Sigmoid colon (tissue), 7 donors: ENCODE measurements at regions of chr9 and their contacts with region 1.

Region 1: GRCh38 chr9:87324613-87325194 is 173.0 kb upstream of the DAPK1 start:
- DNase-seq: no peak
- H3K4me3 ChIP-seq: no peak overlapping the region
- H3K27ac ChIP-seq: no peak overlapping the region
- H3K4me1 ChIP-seq: peaks cover 0 to 16% (median 4%) of the 10 kb centered on the region in 4 donors
- H3K27me3 ChIP-seq: no peaks in the 10 kb centered on the region
- CTCF ChIP-seq: peak; percentile 71 to 85 (median 77)
- EP300 ChIP-seq: no peak
- POLR2A ChIP-seq: no peak

Region 2: GRCh38 chr9:86413966-86414880 is 910.5 kb before region 1 on chr9:
- intact Hi-C with region 1: loop called (anchors 2 kb)
- DNase-seq: no peak
- H3K4me3 ChIP-seq: no peak overlapping the region
- H3K27ac ChIP-seq: no peak overlapping the region
- H3K4me1 ChIP-seq: peaks cover 0 to 6% (median 0%) of the 10 kb centered on the region in 4 donors
- H3K27me3 ChIP-seq: no peaks in the 10 kb centered on the region
- CTCF ChIP-seq: peak; percentile 41 to 77 (median 45)
- EP300 ChIP-seq: no peak
- POLR2A ChIP-seq: no peak

Region 3: DNA sequence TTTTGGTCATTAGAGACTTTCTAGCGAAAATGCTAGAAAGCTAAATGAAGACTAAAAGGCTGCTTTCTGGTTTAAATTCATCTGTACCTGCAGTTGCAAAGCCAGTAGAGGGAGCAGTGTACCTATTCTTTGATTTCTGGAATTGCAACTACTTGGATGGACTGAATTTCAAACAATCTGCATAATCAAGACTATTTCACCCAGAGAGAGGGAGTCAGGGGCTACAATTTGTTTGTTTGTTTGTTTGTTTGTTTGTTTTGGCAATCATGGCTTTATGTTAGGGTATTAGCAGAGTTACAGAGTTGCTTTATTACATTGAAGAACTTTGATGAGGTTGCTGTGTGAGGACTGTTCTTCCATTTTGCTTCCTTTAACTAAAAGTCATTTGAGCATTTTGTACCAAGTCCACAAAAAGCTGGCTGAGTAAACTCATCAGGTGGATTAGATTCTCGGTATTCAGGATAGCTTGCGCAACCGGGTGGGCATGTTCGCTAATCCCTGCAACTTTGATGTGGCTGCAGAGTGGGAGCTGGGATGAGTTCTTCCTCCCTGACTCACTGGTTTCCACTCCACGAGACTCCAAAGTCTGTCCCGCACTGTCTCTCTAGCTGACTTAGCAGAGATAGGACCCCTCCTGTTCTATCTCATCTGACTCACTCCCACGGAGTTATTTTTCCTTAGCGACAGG is 890.5 kb before region 1 on chr9:
- intact Hi-C with region 1: loop called (anchors 2 kb)
- DNase-seq: peak; percentile 86
- H3K4me3 ChIP-seq: no peak overlapping the region
- H3K27ac ChIP-seq: peak overlapping the region in 3 of 4 donors; percentile 14 to 49 (median 26)
- H3K4me1 ChIP-seq: peaks cover 0 to 9% (median 4%) of the 10 kb centered on the region in 4 donors
- H3K27me3 ChIP-seq: no peaks in the 10 kb centered on the region
- CTCF ChIP-seq: peak; percentile 73 to 78 (median 75)
- EP300 ChIP-seq: no peak
- POLR2A ChIP-seq: no peak

Region 4: GRCh38 chr9:86486891-86487837 is 837.5 kb before region 1 on chr9:
- intact Hi-C with region 1: loop called (anchors 1 kb)
- DNase-seq: no peak
- H3K4me3 ChIP-seq: no peak overlapping the region
- H3K27ac ChIP-seq: peak overlapping the region in 1 of 4 donors; percentile 52
- H3K4me1 ChIP-seq: peaks cover 0 to 22% (median 7%) of the 10 kb centered on the region in 4 donors
- H3K27me3 ChIP-seq: no peaks in the 10 kb centered on the region
- CTCF ChIP-seq: peak; percentile 61 to 66 (median 65)
- EP300 ChIP-seq: no peak
- POLR2A ChIP-seq: no peak

Region 5: DNA sequence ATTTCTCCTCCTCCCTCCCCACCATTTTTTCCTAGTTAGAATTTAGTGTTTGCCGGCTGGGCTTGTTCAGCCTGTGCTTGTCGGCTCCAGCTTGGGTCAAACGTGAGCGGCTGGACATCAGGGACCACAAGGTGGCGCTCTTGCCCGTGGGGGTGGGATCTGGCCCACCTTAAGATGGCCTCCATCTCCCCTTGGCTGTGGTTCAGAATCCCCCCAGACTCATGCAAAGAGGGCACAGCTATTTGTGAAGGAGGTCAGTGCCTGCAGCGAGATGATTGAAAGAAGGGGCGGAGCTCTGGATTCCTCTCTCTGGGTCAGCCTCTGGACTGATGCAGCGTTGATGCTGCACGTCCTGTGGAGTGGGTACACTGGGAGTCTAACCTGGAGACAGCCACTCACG is 687.2 kb before region 1 on chr9:
- intact Hi-C with region 1: loop called (anchors 10 kb)
- DNase-seq: no peak
- H3K4me3 ChIP-seq: no peak overlapping the region
- H3K27ac ChIP-seq: no peak overlapping the region
- H3K4me1 ChIP-seq: peaks cover 0 to 29% (median 18%) of the 10 kb centered on the region in 4 donors
- H3K27me3 ChIP-seq: no peaks in the 10 kb centered on the region
- CTCF ChIP-seq: peak in 3 of 4 experiments; percentile 9 to 31 (median 17)
- EP300 ChIP-seq: no peak
- POLR2A ChIP-seq: no peak

Region 6: GRCh38 chr9:87305151-87305550 is 19.6 kb before region 1 on chr9:
- intact Hi-C with region 1: no loop called
- DNase-seq: no peak
- H3K4me3 ChIP-seq: no peak overlapping the region
- H3K27ac ChIP-seq: no peak overlapping the region
- H3K4me1 ChIP-seq: peaks cover 0 to 17% (median 6%) of the 10 kb centered on the region in 4 donors
- H3K27me3 ChIP-seq: no peaks in the 10 kb centered on the region
- CTCF ChIP-seq: no peak
- EP300 ChIP-seq: no peak
- POLR2A ChIP-seq: no peak